ENCODE measurements at regions of chr12 and their contacts with region 1.

Region 1: GRCh38 chr12:452667-453210 is 7.0 kb upstream of the B4GALNT3 start:
- DNase-seq: no peak
- H3K4me3 ChIP-seq: no peak overlapping the region
- H3K27me3 ChIP-seq: peaks cover 10% of the 10 kb centered on the region
- CTCF ChIP-seq: peak; percentile 30; the same call in 1 of the 2 replicates

Region 2: DNA sequence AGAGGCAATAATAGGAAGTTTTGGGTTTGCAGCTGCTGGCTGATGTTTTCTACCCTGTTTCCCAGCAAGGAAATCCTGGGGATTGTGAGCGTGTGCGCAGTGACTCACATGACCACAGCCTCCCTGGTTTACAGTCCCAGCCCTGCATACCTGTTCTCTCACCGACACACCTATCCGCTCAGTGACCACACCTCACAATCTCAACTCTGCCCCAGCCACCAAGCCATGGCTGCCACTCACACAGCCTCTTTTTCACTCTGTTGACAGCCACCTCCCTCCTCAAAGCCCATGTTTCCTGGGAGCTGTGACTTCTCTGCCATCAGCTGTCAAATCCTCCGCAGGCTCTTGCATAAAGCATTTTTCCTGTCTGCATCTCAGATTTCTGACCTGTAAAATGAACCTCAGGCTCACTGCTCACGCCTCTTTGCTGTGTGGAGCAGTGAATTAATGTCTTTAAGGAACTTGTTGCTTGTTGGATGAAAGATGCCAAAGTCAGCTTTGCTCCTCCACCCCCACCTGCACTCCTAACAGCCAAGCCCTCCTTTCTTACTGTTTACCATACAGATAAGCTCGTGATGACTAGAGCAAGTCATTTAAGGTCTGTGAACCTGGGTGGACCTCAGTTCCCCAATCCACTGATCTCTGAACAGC is 50.5 kb after region 1 on chr12:
- CTCF ChIA-PET with region 1: no interaction called
- POLR2A ChIA-PET with region 1: no interaction called
- DNase-seq: no peak
- H3K4me3 ChIP-seq: no peak overlapping the region
- H3K27me3 ChIP-seq: peaks cover 8% of the 10 kb centered on the region
- CTCF ChIP-seq: no peak

Region 3: GRCh38 chr12:538731-539539 is 86.2 kb after region 1 on chr12:
- CTCF ChIA-PET with region 1: interaction called, 33 read pairs
- POLR2A ChIA-PET with region 1: no interaction called
- DNase-seq: no peak
- H3K4me3 ChIP-seq: no peak overlapping the region
- H3K27me3 ChIP-seq: no peaks in the 10 kb centered on the region; the same call in none of the 2 replicates
- CTCF ChIP-seq: no peak

Measured in BJ (cell line).